ENCODE measurements at regions of chr20 and their contacts with region 1.

Region 1: GRCh38 chr20:35432430-35432735 is 5.6 kb downstream of the GDF5 start:
- DNase-seq: no peak
- ATAC-seq: peak; percentile 37
- H3K4me3 ChIP-seq: no peak overlapping the region
- H3K27ac ChIP-seq: no peak overlapping the region
- H3K4me1 ChIP-seq: no peaks in the 10 kb centered on the region
- H3K27me3 ChIP-seq: no peaks in the 10 kb centered on the region
- CTCF ChIP-seq: no peak

Region 2: GRCh38 chr20:35363190-35363589 is 69.2 kb before region 1 on chr20:
- CTCF ChIA-PET with region 1: no interaction called
- POLR2A ChIA-PET with region 1: no interaction called
- intact Hi-C with region 1: no loop called
- DNase-seq: no peak
- ATAC-seq: no peak
- H3K4me3 ChIP-seq: no peak overlapping the region
- H3K27ac ChIP-seq: no peak overlapping the region
- H3K4me1 ChIP-seq: peaks cover 17% of the 10 kb centered on the region
- H3K27me3 ChIP-seq: no peaks in the 10 kb centered on the region
- CTCF ChIP-seq: no peak

Region 3: DNA sequence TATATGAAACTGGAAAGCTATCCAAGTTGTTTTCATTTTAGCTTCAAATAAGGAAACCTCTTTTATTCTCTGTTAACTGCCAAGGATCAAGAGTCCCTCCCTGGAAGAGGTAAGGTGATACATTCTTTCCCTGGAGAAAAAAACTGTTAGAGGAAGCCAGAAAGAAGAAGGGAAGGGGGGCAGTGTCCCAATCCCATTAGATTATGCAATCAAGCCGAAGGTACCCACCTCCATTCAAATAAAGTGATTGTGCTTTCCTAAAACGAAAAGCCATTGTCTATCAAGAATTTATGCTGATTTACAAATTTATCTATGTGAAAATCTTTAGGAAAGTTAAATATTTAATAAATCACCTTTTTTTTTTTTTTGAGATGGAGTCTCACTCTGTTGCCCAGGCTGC is 11.1 kb before region 1 on chr20:
- CTCF ChIA-PET with region 1: no interaction called
- POLR2A ChIA-PET with region 1: interaction called, 18 read pairs
- intact Hi-C with region 1: no loop called
- DNase-seq: no peak
- ATAC-seq: no peak
- H3K4me3 ChIP-seq: no peak overlapping the region
- H3K27ac ChIP-seq: no peak overlapping the region
- H3K4me1 ChIP-seq: no peaks in the 10 kb centered on the region
- H3K27me3 ChIP-seq: no peaks in the 10 kb centered on the region
- CTCF ChIP-seq: no peak

Region 4: GRCh38 chr20:35447082-35447789 is 14.9 kb after region 1 on chr20:
- CTCF ChIA-PET with region 1: no interaction called
- POLR2A ChIA-PET with region 1: interaction called, 31 read pairs
- intact Hi-C with region 1: no loop called
- DNase-seq: peak; percentile 96
- ATAC-seq: peak; percentile 94
- H3K4me3 ChIP-seq: peak overlapping the region; percentile 62; the same call in 1 of the 2 replicates
- H3K27ac ChIP-seq: no peak overlapping the region
- H3K4me1 ChIP-seq: no peaks in the 10 kb centered on the region; the same call in 1 of the 2 replicates
- H3K27me3 ChIP-seq: no peaks in the 10 kb centered on the region
- CTCF ChIP-seq: peak; percentile 88

Measured in PC-3 (cell line).